Activated CD4-positive, alpha-beta T cell treated with anti-CD3 and anti-CD28 coated beads, Interleukin-2, amount 10 ng/mL, durations not matched to agents 24 days and 14 days (primary cell): ENCODE measurements at regions of chr10 and their contacts with region 1.

Region 1: DNA sequence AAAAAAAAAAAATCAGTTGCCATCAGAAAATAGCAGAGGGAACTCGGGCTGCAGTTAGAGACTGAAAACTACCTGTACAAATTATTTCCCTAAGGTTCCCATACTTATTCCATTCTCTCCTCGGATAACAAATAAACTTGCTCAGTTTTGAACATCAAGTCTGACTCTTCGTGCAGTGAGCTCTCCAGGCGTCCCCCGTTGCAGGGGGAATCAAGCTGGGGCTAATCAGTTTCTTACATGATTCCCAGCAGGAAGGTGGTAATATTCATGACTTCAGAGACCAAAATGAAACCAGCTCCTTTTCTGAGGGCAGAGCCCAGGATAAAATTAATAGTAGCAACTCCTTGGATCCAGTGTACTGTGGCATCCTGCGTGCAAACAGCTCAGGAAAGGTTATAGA is 135.3 kb downstream of the FRMD4A start:
- DNase-seq: no peak
- H3K4me3 Mint-ChIP-seq: no peak overlapping the region
- H3K27ac Mint-ChIP-seq: no peak overlapping the region
- H3K4me1 Mint-ChIP-seq: no peaks in the 10 kb centered on the region
- H3K27me3 Mint-ChIP-seq: peaks cover 44% of the 10 kb centered on the region

Region 2: GRCh38 chr10:14163377-14164086 is 31.9 kb before region 1 on chr10:
- intact Hi-C with region 1: no loop called
- DNase-seq: no peak
- H3K4me3 Mint-ChIP-seq: no peak overlapping the region
- H3K27ac Mint-ChIP-seq: no peak overlapping the region
- H3K4me1 Mint-ChIP-seq: no peaks in the 10 kb centered on the region
- H3K27me3 Mint-ChIP-seq: peaks cover 20% of the 10 kb centered on the region

Region 3: GRCh38 chr10:14184841-14185315 is 10.6 kb before region 1 on chr10:
- intact Hi-C with region 1: no loop called
- DNase-seq: peak; percentile 86
- H3K4me3 Mint-ChIP-seq: peak overlapping the region; percentile 62
- H3K27ac Mint-ChIP-seq: peak overlapping the region; percentile 92
- H3K4me1 Mint-ChIP-seq: peaks cover 19% of the 10 kb centered on the region
- H3K27me3 Mint-ChIP-seq: peaks cover 64% of the 10 kb centered on the region

Region 4: GRCh38 chr10:14822879-14823755 is 627.7 kb after region 1 on chr10:
- intact Hi-C with region 1: loop called (anchors 5 kb)
- DNase-seq: peak; percentile 79
- H3K4me3 Mint-ChIP-seq: no peak overlapping the region
- H3K27ac Mint-ChIP-seq: no peak overlapping the region
- H3K4me1 Mint-ChIP-seq: peaks cover 12% of the 10 kb centered on the region
- H3K27me3 Mint-ChIP-seq: peaks cover 12% of the 10 kb centered on the region

Region 5: GRCh38 chr10:14971867-14972448 is 776.5 kb after region 1 on chr10:
- intact Hi-C with region 1: loop called (anchors 5 kb)
- DNase-seq: peak; percentile 85
- H3K4me3 Mint-ChIP-seq: no peak overlapping the region
- H3K27ac Mint-ChIP-seq: no peak overlapping the region
- H3K4me1 Mint-ChIP-seq: peaks cover 9% of the 10 kb centered on the region
- H3K27me3 Mint-ChIP-seq: peaks cover 18% of the 10 kb centered on the region